MCF 10A (cell line): ENCODE measurements at regions of chr14 and their contacts with region 1.

Region 1: GRCh38 chr14:36553656-36554260 is 28.7 kb downstream of the NKX2-8 start:
- DNase-seq: peak; percentile 61
- H3K4me3 Mint-ChIP-seq: no peak overlapping the region
- H3K27ac Mint-ChIP-seq: no peak overlapping the region
- H3K4me1 Mint-ChIP-seq: peaks cover 5% of the 10 kb centered on the region
- H3K27me3 Mint-ChIP-seq: no peaks in the 10 kb centered on the region
- CTCF ChIP-seq: peak; percentile 56

Region 2: DNA sequence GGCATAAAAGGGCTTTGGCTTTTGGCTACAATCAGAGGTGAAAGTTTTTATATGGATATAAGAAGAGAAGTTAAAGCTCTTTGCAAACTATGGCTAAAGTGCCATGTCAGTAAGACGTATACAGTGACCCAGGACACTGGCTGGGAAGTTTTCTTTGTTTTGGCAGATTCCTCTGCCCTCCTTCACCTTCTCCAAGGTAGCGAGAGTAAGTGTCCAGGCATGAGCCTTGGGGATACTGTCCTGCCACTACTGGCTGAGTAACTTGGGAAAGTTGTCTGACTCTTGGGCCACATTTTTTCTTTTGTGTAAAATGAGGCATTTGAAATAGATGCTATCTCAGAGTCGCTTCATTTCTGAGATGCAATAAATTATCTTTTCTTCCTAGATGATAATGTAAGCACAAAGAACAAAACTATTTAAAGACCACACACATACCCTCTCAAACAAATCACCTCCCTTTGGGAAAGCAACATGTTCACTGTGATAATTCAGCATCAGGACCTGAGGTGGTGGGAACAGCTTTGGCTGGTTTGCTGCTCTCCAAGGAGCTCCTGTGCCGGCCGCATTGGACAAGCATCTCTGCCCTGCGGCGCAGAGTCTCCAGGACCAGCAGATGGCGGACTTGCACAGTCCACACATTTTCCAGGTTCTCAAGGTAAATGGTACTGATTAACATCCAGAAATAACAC is 483.6 kb before region 1 on chr14:
- CTCF ChIA-PET with region 1: interaction called, 69 read pairs
- POLR2A ChIA-PET with region 1: no interaction called
- intact Hi-C with region 1: loop called (anchors 1 kb)
- DNase-seq: peak; percentile 79
- H3K4me3 Mint-ChIP-seq: peak overlapping the region; percentile 37
- H3K27ac Mint-ChIP-seq: peak overlapping the region; percentile 92
- H3K4me1 Mint-ChIP-seq: peaks cover 10% of the 10 kb centered on the region
- H3K27me3 Mint-ChIP-seq: no peaks in the 10 kb centered on the region
- CTCF ChIP-seq: peak; percentile 82

Region 3: DNA sequence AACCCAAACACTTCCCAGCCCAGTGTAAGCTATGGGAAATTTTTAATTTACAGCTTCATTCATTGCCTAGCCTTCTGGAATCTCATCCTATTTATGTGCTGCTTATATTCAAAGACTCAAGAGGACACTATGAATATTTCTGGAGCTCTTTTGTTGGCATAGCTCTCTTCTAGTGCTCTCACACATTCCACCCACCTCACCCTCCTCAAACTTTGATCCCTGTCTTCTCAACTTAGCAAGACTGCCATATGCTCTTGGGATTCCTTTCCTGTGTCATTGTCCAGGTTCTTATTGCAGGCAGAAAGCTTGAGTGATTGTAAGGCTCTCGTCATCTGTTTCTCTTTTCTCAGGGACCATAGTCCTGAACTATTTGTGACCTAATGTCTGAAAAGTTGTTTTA is 15.7 kb before region 1 on chr14:
- CTCF ChIA-PET with region 1: interaction called, 48 read pairs
- POLR2A ChIA-PET with region 1: interaction called, 4 read pairs
- intact Hi-C with region 1: no loop called
- DNase-seq: no peak
- H3K4me3 Mint-ChIP-seq: no peak overlapping the region
- H3K27ac Mint-ChIP-seq: no peak overlapping the region
- H3K4me1 Mint-ChIP-seq: no peaks in the 10 kb centered on the region
- H3K27me3 Mint-ChIP-seq: peaks cover 45% of the 10 kb centered on the region
- CTCF ChIP-seq: no peak

Region 4: DNA sequence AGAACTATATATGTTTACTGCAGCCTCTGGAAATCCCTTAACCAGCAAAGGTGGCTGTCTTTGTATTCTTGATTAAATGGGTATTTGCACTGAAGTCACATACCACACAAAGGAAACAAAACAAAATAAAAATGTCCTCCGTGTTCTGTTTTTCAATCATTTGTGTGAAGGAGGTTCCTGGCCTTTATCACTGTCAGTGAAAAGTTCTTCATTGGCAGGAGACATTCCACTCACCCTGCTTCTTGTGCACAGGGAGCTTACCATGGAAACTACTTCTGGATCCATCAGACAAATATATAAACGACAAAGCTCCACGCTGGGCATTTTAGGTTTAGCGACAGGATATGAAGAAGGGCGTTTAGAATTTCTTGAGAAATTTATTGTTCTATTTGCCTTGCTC is 34.4 kb after region 1 on chr14:
- CTCF ChIA-PET with region 1: interaction called, 36 read pairs
- POLR2A ChIA-PET with region 1: interaction called, 4 read pairs
- intact Hi-C with region 1: no loop called
- DNase-seq: no peak
- H3K4me3 Mint-ChIP-seq: no peak overlapping the region
- H3K27ac Mint-ChIP-seq: no peak overlapping the region
- H3K4me1 Mint-ChIP-seq: no peaks in the 10 kb centered on the region
- H3K27me3 Mint-ChIP-seq: no peaks in the 10 kb centered on the region
- CTCF ChIP-seq: no peak

Region 5: GRCh38 chr14:36647824-36648753 is 94.3 kb after region 1 on chr14:
- CTCF ChIA-PET with region 1: interaction called, 20 read pairs
- POLR2A ChIA-PET with region 1: no interaction called
- intact Hi-C with region 1: no loop called
- DNase-seq: peak; percentile 63
- H3K4me3 Mint-ChIP-seq: peak overlapping the region; percentile 71
- H3K27ac Mint-ChIP-seq: no peak overlapping the region
- H3K4me1 Mint-ChIP-seq: peaks cover 5% of the 10 kb centered on the region
- H3K27me3 Mint-ChIP-seq: no peaks in the 10 kb centered on the region
- CTCF ChIP-seq: peak; percentile 65

Region 6: GRCh38 chr14:37116933-37117849 is 563.4 kb after region 1 on chr14:
- CTCF ChIA-PET with region 1: interaction called, 33 read pairs
- POLR2A ChIA-PET with region 1: interaction called, 5 read pairs
- intact Hi-C with region 1: no loop called
- DNase-seq: peak; percentile 83
- H3K4me3 Mint-ChIP-seq: peak overlapping the region; percentile 62
- H3K27ac Mint-ChIP-seq: peak overlapping the region; percentile 98
- H3K4me1 Mint-ChIP-seq: peaks cover 31% of the 10 kb centered on the region
- H3K27me3 Mint-ChIP-seq: no peaks in the 10 kb centered on the region
- CTCF ChIP-seq: peak; percentile 70